Heart right ventricle (tissue), 16 donors: ENCODE measurements at regions of chr2 and their contacts with region 1.

Region 1: DNA sequence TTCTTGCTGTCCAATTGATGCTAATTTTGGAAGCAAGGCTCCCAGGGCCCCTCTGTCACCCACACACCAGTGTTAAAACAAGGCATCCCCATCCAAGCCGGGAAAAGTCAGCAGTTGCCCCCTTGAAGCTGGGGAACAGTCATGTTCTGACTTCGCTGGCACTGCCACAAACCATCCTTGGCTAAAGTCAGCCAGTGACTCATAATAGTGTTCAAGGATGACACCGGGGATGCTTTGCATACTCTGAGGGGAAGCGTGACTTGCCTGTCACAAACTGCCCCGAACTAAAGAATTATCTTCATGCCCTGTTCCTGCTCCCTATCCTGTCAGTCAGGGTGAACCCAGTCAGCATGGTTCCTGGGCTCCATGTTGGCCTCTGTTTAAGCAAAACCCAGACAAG is 37.0 kb downstream of the TGFA start:
- DNase-seq: no peak
- ATAC-seq: peak in 3 of 8 donors; percentile 20 to 39 (median 29)
- H3K4me3 ChIP-seq: no peak overlapping the region
- H3K27ac ChIP-seq: peak overlapping the region in 1 of 10 donors; percentile 83
- H3K4me1 ChIP-seq: peaks cover 0 to 27% (median 0%) of the 10 kb centered on the region in 9 donors
- H3K27me3 ChIP-seq: peaks cover 0 to 6% (median 0%) of the 10 kb centered on the region in 7 donors
- CTCF ChIP-seq: no peak

Region 2: DNA sequence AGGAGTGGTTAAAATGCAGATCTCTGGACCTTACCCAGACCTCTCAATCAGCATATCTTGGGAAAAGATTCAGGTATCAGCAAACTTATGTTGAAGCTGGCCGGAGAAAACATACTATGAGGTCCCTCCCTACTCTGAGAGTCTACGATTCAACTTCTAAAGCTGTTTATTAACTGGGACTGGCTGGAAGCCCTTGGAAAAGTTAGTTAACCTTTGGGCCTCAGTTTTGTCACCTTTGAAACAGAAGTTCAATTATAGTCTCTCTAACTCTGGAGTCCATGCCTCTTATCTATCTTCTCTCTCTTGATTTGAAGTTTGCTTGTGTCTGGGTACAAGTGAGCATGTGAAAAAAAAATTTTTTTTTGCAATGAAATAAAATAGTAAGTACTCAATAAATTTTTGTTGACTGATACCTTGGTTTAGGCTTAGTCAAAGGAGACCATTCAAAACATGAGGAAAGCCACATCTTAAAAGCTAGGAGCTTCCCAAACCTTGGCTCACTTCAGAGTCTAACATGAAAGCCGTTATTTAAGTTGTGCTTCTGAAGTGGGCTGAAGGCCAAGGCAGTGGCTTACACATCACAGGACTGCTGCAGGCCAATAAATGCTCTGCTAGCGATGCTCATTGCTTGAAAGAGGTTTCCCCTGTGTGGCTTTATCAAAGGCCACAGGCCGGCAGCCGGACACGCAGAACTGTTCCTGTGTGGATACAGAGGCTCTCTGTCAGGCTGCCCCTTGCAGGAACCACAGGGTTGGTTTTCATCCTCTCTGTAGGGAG is 104.1 kb before region 1 on chr2:
- intact Hi-C with region 1: loop called in 1 of 10 experiments (anchors 5 kb)
- DNase-seq: no peak
- ATAC-seq: no peak
- H3K4me3 ChIP-seq: no peak overlapping the region
- H3K27ac ChIP-seq: no peak overlapping the region
- H3K4me1 ChIP-seq: no peaks in the 10 kb centered on the region
- H3K27me3 ChIP-seq: peaks cover 0 to 8% (median 0%) of the 10 kb centered on the region in 7 donors
- CTCF ChIP-seq: no peak